Activated CD4-positive, alpha-beta memory T cell treated with anti-CD3 and anti-CD28 coated beads for 36 hours (primary cell): ENCODE measurements at regions of chr11 and their contacts with region 1.

Region 1: DNA sequence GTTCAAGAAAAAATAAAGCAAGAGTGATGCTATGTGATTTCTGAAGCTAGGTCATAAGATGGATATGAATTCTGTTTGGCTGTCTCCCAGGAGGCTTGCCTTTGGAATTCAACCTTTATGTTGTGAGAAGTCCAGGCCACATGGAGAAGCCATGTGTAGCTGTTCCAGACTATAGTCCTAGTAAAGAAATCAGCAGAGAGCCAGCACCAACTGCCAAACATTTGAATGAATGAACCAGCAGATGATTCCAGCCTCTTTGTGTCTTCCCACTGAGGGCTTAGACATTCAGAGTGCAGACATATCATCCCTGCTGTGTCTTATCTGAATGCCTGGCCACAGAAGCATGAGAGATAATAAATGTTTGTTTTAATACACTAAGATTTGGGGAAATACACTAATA is 1150.6 kb downstream of the DLG2 start:
- DNase-seq: no peak
- H3K4me3 Mint-ChIP-seq: no peak overlapping the region
- H3K27ac Mint-ChIP-seq: no peak overlapping the region
- H3K4me1 Mint-ChIP-seq: no peaks in the 10 kb centered on the region
- H3K27me3 Mint-ChIP-seq: no peaks in the 10 kb centered on the region

Region 2: DNA sequence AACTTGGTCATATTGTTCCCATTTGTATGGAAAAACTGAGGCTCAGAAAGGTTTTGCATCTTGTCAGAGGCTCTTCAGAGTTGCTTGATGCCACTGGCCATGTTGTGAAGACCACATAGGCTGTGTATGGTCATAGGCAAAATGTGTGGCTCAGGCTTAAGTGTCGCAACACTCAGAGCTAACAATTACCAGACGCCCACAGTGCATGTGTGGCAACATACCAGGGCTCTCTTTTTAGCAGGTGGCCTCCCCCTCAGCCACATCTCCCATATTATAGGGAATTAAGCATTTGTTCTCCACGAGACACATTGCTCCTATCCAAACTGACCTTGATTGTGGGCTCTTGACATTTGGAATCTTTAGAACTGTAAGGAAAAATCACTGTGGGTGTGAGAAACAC is 348.0 kb after region 1 on chr11:
- CTCF ChIA-PET with region 1: no interaction called
- POLR2A ChIA-PET with region 1: no interaction called
- intact Hi-C with region 1: loop called (anchors 5 kb)
- DNase-seq: no peak
- H3K4me3 Mint-ChIP-seq: no peak overlapping the region
- H3K27ac Mint-ChIP-seq: no peak overlapping the region
- H3K4me1 Mint-ChIP-seq: no peaks in the 10 kb centered on the region
- H3K27me3 Mint-ChIP-seq: no peaks in the 10 kb centered on the region